ENCODE measurements at regions of chr4 and their contacts with region 1.

Region 1: DNA sequence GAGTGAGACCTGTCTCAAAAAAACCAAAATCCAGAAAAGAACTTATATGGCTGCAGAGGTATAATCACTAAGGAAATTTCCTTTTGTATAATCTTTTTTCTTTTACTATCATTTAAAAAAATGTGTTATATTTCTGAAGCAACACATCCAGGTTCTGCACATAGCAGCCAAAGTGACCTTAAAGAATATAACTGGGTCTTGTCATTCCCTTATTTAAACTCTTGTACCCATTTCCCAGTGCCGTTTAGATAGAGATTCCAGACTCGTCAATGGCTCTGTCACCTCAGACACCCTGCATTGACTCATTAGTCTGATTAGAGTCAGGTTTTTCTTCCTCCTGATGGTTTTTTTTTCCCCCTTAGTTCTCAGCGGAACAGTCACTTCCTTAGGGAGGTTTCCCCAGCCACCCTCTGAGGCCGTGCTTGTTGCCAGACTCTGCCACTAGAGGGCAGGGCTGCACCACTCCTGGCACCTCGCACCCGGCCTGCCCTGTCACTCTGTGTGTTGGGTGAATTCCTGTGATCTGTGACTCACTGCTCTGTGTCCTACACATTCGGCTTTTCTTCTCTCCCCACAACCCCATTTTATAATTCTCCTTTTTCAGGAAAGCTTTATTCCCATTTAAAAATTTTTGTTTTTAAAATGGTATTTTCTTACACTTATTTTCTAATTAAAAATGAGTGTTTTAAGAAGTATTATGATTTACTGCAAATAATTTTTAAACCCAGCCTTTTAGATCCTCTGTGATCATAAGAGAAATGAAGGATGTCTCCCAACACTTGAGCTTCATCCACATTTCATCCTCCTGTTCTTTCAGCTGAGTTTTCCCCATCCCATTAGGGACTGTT is 32.1 kb downstream of the HTT start:
- DNase-seq: peak; percentile 82 to 89
- ATAC-seq: peak; percentile 94 to 98
- H3K4me3 ChIP-seq: peak overlapping the region in 1 of 4 donors; percentile 10
- H3K27ac ChIP-seq: peak overlapping the region; percentile 72 to 84 (median 82)
- H3K4me1 ChIP-seq: peaks cover 27% of the 10 kb centered on the region in 2 donors
- H3K27me3 ChIP-seq: no peaks in the 10 kb centered on the region
- CTCF ChIP-seq: peak; percentile 94 to 99 (median 96)
- POLR2A ChIP-seq: no peak

Region 2: GRCh38 chr4:3047464-3048286 is 58.9 kb before region 1 on chr4:
- in situ Hi-C with region 1: no loop called
- intact Hi-C with region 1: loop called (anchors 5 kb)
- DNase-seq: peak; percentile 51 to 85
- ATAC-seq: peak; percentile 80 to 94
- H3K4me3 ChIP-seq: peak overlapping the region; percentile 29 to 57 (median 53)
- H3K27ac ChIP-seq: peak overlapping the region; percentile 51 to 84 (median 74)
- H3K4me1 ChIP-seq: peaks cover 0 to 9% of the 10 kb centered on the region in 2 donors
- H3K27me3 ChIP-seq: no peaks in the 10 kb centered on the region
- CTCF ChIP-seq: peak; percentile 57 to 80 (median 72)
- POLR2A ChIP-seq: no peak

Region 3: DNA sequence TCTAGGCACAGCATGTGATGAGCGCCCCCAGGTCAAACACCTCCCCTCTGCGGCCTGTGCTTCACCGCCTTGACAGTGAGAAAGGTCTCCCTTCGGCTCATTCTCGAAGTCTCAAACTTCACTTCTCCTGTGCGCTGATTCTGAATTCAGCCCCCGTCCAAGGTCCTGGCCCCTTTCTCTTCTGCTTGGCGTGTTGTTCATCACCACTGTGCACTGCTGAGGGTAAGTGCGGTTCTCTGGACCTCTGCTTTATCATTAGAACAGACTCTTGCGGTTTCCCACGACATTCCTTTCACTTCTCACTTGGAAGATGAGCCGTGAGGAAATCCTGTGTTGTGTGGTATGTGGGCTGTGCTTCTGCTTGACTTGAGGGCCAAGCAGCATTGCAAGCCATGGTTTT is 44.1 kb before region 1 on chr4:
- in situ Hi-C with region 1: no loop called
- intact Hi-C with region 1: no loop called
- DNase-seq: no peak
- ATAC-seq: no peak
- H3K4me3 ChIP-seq: no peak overlapping the region
- H3K27ac ChIP-seq: no peak overlapping the region
- H3K4me1 ChIP-seq: no peaks in the 10 kb centered on the region
- H3K27me3 ChIP-seq: no peaks in the 10 kb centered on the region
- CTCF ChIP-seq: no peak
- POLR2A ChIP-seq: no peak

Region 4: DNA sequence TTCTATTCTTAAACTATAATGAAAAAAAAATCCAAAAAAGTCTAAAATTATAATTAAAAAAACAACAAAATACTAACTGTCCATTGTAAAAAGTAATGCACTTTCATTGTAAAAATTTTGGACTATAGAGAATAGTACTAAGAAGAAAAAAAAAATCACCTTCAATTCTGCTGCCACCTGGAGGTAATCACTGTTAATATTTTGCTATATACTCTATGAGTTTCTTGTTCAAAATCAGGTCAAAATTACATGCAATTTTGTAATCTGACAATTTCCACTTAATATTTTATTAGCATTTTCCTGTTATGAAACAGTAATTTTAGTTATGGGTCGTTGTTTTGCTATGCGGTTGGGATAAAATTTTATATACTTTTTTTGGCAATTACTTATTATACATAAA is 29.9 kb after region 1 on chr4:
- in situ Hi-C with region 1: no loop called
- intact Hi-C with region 1: loop called (anchors 1 kb)
- DNase-seq: no peak
- ATAC-seq: no peak
- H3K4me3 ChIP-seq: no peak overlapping the region
- H3K27ac ChIP-seq: no peak overlapping the region
- H3K4me1 ChIP-seq: no peaks in the 10 kb centered on the region
- H3K27me3 ChIP-seq: no peaks in the 10 kb centered on the region
- CTCF ChIP-seq: peak in 4 of 5 experiments; percentile 18 to 54 (median 32)
- POLR2A ChIP-seq: no peak

Measured in gastrocnemius medialis (tissue), 4 donors.